T-cell (primary cell): ENCODE measurements at regions of chr4 and their contacts with region 1.

Region 1: GRCh38 chr4:142645475-142646108 is 200.5 kb downstream of the INPP4B start:
- DNase-seq: peak in 2 of 35 experiments; percentile 9 to 11
- ATAC-seq: peak; percentile 46 to 73 (median 60)
- H3K4me3 ChIP-seq: no peak overlapping the region
- H3K4me3 Mint-ChIP-seq: peak overlapping the region in 2 of 3 donors; percentile 45 to 70
- H3K27ac ChIP-seq: no peak overlapping the region
- H3K27ac Mint-ChIP-seq: peak overlapping the region; percentile 71 to 94
- H3K4me1 ChIP-seq: peaks cover 4 to 18% of the 10 kb centered on the region in 2 experiments
- H3K4me1 Mint-ChIP-seq: peaks cover 22 to 23% (median 22%) of the 10 kb centered on the region in 3 donors
- H3K27me3 ChIP-seq: no peaks in the 10 kb centered on the region
- H3K27me3 Mint-ChIP-seq: no peaks in the 10 kb centered on the region

Region 2: GRCh38 chr4:142516670-142517526 is 128.7 kb before region 1 on chr4:
- CTCF ChIA-PET with region 1: no interaction called
- POLR2A ChIA-PET with region 1: interaction called in 1 of 2 experiments, 16 read pairs
- DNase-seq: no peak
- ATAC-seq: no peak
- H3K4me3 ChIP-seq: no peak overlapping the region
- H3K4me3 Mint-ChIP-seq: no peak overlapping the region
- H3K27ac ChIP-seq: no peak overlapping the region
- H3K27ac Mint-ChIP-seq: no peak overlapping the region
- H3K4me1 ChIP-seq: no peaks in the 10 kb centered on the region
- H3K4me1 Mint-ChIP-seq: peaks cover 0 to 6% (median 2%) of the 10 kb centered on the region in 3 donors
- H3K27me3 ChIP-seq: no peaks in the 10 kb centered on the region
- H3K27me3 Mint-ChIP-seq: no peaks in the 10 kb centered on the region